HepG2 (cell line): ENCODE measurements at regions of chr7 and their contacts with region 1.

Region 1: GRCh38 chr7:31488562-31489203 is 25.2 kb upstream of the ITPRID1 start:
- DNase-seq: peak; percentile 31
- ATAC-seq: peak; percentile 96
- H3K4me3 ChIP-seq: no peak overlapping the region
- H3K27ac ChIP-seq: no peak overlapping the region
- H3K4me1 ChIP-seq: no peaks in the 10 kb centered on the region
- H3K27me3 ChIP-seq: no peaks in the 10 kb centered on the region
- CTCF ChIP-seq: peak; percentile 67
- EP300 ChIP-seq: no peak
- POLR2A ChIP-seq: no peak
- RAD21 ChIP-seq: peak; percentile 29; the same call in 1 of the 2 replicates

Region 2: GRCh38 chr7:31134246-31135188 is 354.2 kb before region 1 on chr7:
- CTCF ChIA-PET with region 1: interaction called, 11 read pairs
- POLR2A ChIA-PET with region 1: no interaction called
- in situ Hi-C with region 1: no loop called
- intact Hi-C with region 1: loop called (anchors 5 kb)
- DNase-seq: peak; percentile 58
- ATAC-seq: peak; percentile 100
- H3K4me3 ChIP-seq: no peak overlapping the region
- H3K27ac ChIP-seq: no peak overlapping the region
- H3K4me1 ChIP-seq: no peaks in the 10 kb centered on the region
- H3K27me3 ChIP-seq: no peaks in the 10 kb centered on the region; a peak in 1 of 5 replicates
- CTCF ChIP-seq: peak; percentile 90
- EP300 ChIP-seq: no peak
- POLR2A ChIP-seq: no peak
- RAD21 ChIP-seq: peak; percentile 26; the same call in 1 of the 2 replicates

Region 3: GRCh38 chr7:31192986-31193385 is 295.7 kb before region 1 on chr7:
- CTCF ChIA-PET with region 1: interaction called, 5 read pairs
- POLR2A ChIA-PET with region 1: no interaction called
- in situ Hi-C with region 1: loop called (anchors 25 kb)
- intact Hi-C with region 1: no loop called
- DNase-seq: peak; percentile 35
- ATAC-seq: peak; percentile 99
- H3K4me3 ChIP-seq: no peak overlapping the region
- H3K27ac ChIP-seq: no peak overlapping the region
- H3K4me1 ChIP-seq: no peaks in the 10 kb centered on the region
- H3K27me3 ChIP-seq: no peaks in the 10 kb centered on the region
- CTCF ChIP-seq: peak; percentile 87
- EP300 ChIP-seq: no peak
- POLR2A ChIP-seq: no peak
- RAD21 ChIP-seq: peak; percentile 65

Region 4: GRCh38 chr7:31373337-31374289 is 115.1 kb before region 1 on chr7:
- CTCF ChIA-PET with region 1: no interaction called
- POLR2A ChIA-PET with region 1: no interaction called
- in situ Hi-C with region 1: no loop called
- intact Hi-C with region 1: loop called (anchors 1 kb)
- DNase-seq: peak; percentile 34
- ATAC-seq: peak; percentile 96
- H3K4me3 ChIP-seq: no peak overlapping the region
- H3K27ac ChIP-seq: no peak overlapping the region
- H3K4me1 ChIP-seq: no peaks in the 10 kb centered on the region
- H3K27me3 ChIP-seq: peaks cover 0 to 8% of the 10 kb centered on the region in 2 experiments; a peak in 1 of 5 replicates
- CTCF ChIP-seq: peak; percentile 64
- EP300 ChIP-seq: no peak
- POLR2A ChIP-seq: no peak
- RAD21 ChIP-seq: no peak

Region 5: GRCh38 chr7:31443457-31443856 is 45.2 kb before region 1 on chr7:
- CTCF ChIA-PET with region 1: interaction called, 9 read pairs
- POLR2A ChIA-PET with region 1: no interaction called
- in situ Hi-C with region 1: no loop called
- intact Hi-C with region 1: loop called (anchors 1 kb)
- DNase-seq: peak; percentile 26
- ATAC-seq: peak; percentile 69
- H3K4me3 ChIP-seq: no peak overlapping the region
- H3K27ac ChIP-seq: no peak overlapping the region
- H3K4me1 ChIP-seq: no peaks in the 10 kb centered on the region
- H3K27me3 ChIP-seq: 0 out of 5 replicates have a peak, but pooled peaks cover 0 to 1% of the 10 kb centered on the region in 2 experiments
- CTCF ChIP-seq: peak; percentile 70
- EP300 ChIP-seq: no peak
- POLR2A ChIP-seq: no peak
- RAD21 ChIP-seq: no peak

Region 6: DNA sequence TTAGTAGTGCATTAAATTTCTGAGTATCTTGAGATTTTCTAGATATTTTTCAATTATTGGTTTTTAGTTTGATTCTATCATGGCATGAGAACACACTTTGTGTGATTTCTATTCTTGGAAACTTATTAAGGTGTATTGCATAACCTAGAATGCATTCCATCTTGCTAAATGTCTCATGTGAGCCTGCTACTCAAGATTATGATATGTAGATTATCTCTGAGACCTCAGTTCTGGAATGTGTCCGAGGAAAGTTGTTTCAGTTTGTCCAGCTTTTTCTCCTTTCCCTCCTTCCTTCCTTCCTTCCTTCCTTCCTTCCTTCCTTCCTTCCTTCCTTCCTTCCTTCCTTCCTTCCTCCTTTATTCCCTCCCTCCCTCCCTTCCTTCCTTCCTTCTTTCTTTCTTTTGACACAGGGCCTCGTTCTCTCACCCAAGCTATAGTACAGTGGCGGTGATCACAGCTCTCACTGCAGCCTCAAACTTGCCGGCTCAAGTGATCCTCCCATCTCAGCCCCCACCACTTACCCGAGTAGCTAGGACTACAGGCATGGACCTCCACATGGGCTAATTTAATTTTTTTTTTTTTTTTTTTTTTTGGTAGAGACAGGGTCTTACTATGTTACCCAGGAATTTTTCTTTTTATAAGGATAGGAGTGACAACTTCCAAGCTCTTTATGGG is 32.8 kb after region 1 on chr7:
- CTCF ChIA-PET with region 1: no interaction called
- POLR2A ChIA-PET with region 1: no interaction called
- in situ Hi-C with region 1: no loop called
- intact Hi-C with region 1: no loop called
- DNase-seq: no peak
- ATAC-seq: no peak
- H3K4me3 ChIP-seq: no peak overlapping the region
- H3K27ac ChIP-seq: no peak overlapping the region
- H3K4me1 ChIP-seq: no peaks in the 10 kb centered on the region
- H3K27me3 ChIP-seq: no peaks in the 10 kb centered on the region
- CTCF ChIP-seq: no peak
- EP300 ChIP-seq: no peak
- POLR2A ChIP-seq: no peak
- RAD21 ChIP-seq: no peak

Region 7: GRCh38 chr7:31550432-31550831 is 61.7 kb after region 1 on chr7:
- CTCF ChIA-PET with region 1: no interaction called
- POLR2A ChIA-PET with region 1: no interaction called
- in situ Hi-C with region 1: no loop called
- intact Hi-C with region 1: no loop called
- DNase-seq: no peak
- ATAC-seq: no peak
- H3K4me3 ChIP-seq: no peak overlapping the region
- H3K27ac ChIP-seq: no peak overlapping the region
- H3K4me1 ChIP-seq: no peaks in the 10 kb centered on the region
- H3K27me3 ChIP-seq: no peaks in the 10 kb centered on the region
- CTCF ChIP-seq: no peak
- EP300 ChIP-seq: no peak
- POLR2A ChIP-seq: no peak
- RAD21 ChIP-seq: no peak